ENCODE measurements at regions of chr1 and their contacts with region 1.

Region 1: GRCh38 chr1:219987325-219987724 is 59.0 kb upstream of the SLC30A10 start:
- DNase-seq: no peak
- ATAC-seq: no peak
- H3K4me3 ChIP-seq: no peak overlapping the region
- H3K27ac ChIP-seq: no peak overlapping the region
- H3K4me1 ChIP-seq: no peaks in the 10 kb centered on the region
- H3K27me3 ChIP-seq: no peaks in the 10 kb centered on the region
- CTCF ChIP-seq: no peak

Region 2: DNA sequence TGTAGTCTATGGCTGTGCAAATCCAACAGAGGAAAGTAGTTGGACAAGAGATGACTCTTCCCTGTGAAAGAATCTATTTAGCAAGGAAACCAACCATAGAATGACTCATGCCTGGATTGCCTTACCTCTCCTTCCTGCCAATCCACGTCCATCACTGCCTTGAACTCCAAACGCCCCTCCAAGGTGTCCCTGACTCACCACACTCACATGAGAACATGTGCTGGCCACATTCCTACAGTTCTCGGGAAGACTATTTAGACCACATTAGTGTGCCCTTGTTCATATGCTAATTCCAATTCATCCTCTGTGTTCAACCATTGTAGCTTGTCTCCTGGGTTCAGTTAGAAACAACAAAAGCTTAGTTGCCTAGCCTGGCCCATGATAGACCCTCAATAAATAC is 216.2 kb before region 1 on chr1:
- CTCF ChIA-PET with region 1: no interaction called
- POLR2A ChIA-PET with region 1: no interaction called
- in situ Hi-C with region 1: no loop called
- intact Hi-C with region 1: no loop called
- DNase-seq: no peak
- ATAC-seq: no peak
- H3K4me3 ChIP-seq: no peak overlapping the region
- H3K27ac ChIP-seq: no peak overlapping the region
- H3K4me1 ChIP-seq: no peaks in the 10 kb centered on the region
- H3K27me3 ChIP-seq: no peaks in the 10 kb centered on the region
- CTCF ChIP-seq: no peak

Region 3: GRCh38 chr1:220032911-220033310 is 45.6 kb after region 1 on chr1:
- CTCF ChIA-PET with region 1: no interaction called
- POLR2A ChIA-PET with region 1: interaction called, 14 read pairs
- in situ Hi-C with region 1: no loop called
- intact Hi-C with region 1: no loop called
- DNase-seq: no peak
- ATAC-seq: no peak
- H3K4me3 ChIP-seq: no peak overlapping the region
- H3K27ac ChIP-seq: no peak overlapping the region
- H3K4me1 ChIP-seq: no peaks in the 10 kb centered on the region
- H3K27me3 ChIP-seq: no peaks in the 10 kb centered on the region
- CTCF ChIP-seq: no peak

Region 4: GRCh38 chr1:220089650-220090556 is 102.6 kb after region 1 on chr1 and contains the start of gene BPNT1:
- CTCF ChIA-PET with region 1: no interaction called
- POLR2A ChIA-PET with region 1: interaction called, 15 read pairs
- in situ Hi-C with region 1: no loop called
- intact Hi-C with region 1: no loop called
- DNase-seq: peak; percentile 95
- ATAC-seq: peak; percentile 85
- H3K4me3 ChIP-seq: peak within 1 kb of the TSS; percentile 83 to 85
- H3K27ac ChIP-seq: peak within 1 kb of the TSS; percentile 85
- H3K4me1 ChIP-seq: no peaks in the 10 kb centered on the region
- H3K27me3 ChIP-seq: no peaks in the 10 kb centered on the region
- CTCF ChIP-seq: no peak
- total RNA-seq, gene BPNT1: 20.8 TPM